A673 (cell line): ENCODE measurements at regions of chr2 and their contacts with region 1.

Region 1: DNA sequence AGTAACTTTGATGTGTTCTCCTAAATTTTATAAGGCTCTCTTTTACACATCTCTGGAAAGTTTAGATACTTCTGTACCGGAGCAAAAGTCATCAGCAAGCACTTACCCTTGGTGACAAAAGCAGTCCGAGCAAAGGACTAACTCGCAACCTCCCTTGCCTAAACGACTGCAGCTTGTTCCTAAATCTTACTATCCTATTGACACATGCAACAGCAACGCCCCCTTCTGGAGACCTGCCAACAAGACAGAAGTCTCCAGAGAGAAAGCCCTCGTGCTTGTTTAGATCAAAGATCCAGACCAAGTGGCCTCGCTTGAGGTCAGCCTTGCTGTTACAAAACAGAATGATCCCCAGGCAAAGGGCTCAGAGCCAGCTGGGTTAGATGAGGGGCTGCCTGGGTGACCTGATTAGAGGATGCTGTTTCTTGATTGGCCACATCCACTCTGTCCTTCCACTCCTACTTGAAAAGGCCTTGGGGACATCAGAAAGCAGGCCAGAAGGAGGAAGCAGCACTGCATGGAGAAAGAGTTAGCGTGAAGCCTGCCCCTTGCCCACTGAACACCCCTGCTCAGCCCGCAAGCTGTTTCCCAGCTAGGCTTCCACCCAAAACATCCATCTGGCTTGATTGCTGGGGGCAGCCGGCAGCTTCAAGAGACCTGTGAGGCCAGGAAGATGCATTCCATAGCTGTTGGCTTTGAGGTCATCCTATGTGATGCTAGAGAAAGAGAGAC is 94.3 kb downstream of the HNRNPLL start:
- DNase-seq: peak; percentile 92
- H3K4me3 ChIP-seq: no peak overlapping the region
- H3K27ac ChIP-seq: peak overlapping the region; percentile 36
- H3K4me1 ChIP-seq: peaks cover 20% of the 10 kb centered on the region
- H3K27me3 ChIP-seq: no peaks in the 10 kb centered on the region
- CTCF ChIP-seq: peak; percentile 83

Region 2: GRCh38 chr2:38377050-38377828 is 131.2 kb before region 1 on chr2 and contains the start of gene ATL2:
- CTCF ChIA-PET with region 1: no interaction called
- POLR2A ChIA-PET with region 1: no interaction called
- intact Hi-C with region 1: loop called (anchors 5 kb)
- DNase-seq: peak; percentile 97
- H3K4me3 ChIP-seq: peak within 1 kb of the TSS; percentile 96
- H3K27ac ChIP-seq: peak within 1 kb of the TSS; percentile 97
- H3K4me1 ChIP-seq: peaks cover 20% of the 10 kb centered on the region
- H3K27me3 ChIP-seq: no peaks in the 10 kb centered on the region
- CTCF ChIP-seq: no peak
- total RNA-seq, gene ATL2: 76.0 and 85.5 TPM in 2 replicates

Region 3: DNA sequence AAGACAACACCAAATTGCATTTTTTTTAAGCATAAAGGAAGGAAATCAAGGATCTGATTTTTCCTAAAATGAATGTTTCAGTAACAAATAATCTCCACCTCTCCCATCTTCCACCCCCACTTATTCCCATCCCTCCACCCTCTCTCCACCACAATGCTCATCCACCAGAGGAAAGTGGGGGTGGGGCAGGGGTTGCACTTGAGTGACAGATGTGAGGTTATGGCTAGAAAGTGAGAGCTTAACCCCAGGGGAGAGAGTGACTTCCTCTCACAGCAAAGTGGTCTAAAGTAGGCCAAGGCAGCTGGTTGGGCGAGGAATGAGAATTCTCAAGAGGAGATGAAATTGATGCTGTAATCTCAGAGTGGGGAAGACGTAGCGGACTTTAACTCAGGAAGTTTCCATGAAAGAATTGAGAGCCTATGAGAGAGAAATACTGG is 10.4 kb before region 1 on chr2:
- CTCF ChIA-PET with region 1: interaction called, 15 read pairs
- POLR2A ChIA-PET with region 1: no interaction called
- intact Hi-C with region 1: no loop called
- DNase-seq: peak; percentile 76
- H3K4me3 ChIP-seq: no peak overlapping the region
- H3K27ac ChIP-seq: no peak overlapping the region
- H3K4me1 ChIP-seq: peaks cover 7% of the 10 kb centered on the region
- H3K27me3 ChIP-seq: no peaks in the 10 kb centered on the region
- CTCF ChIP-seq: no peak

Region 4: GRCh38 chr2:38771632-38772031 is 263.2 kb after region 1 on chr2:
- CTCF ChIA-PET with region 1: no interaction called
- POLR2A ChIA-PET with region 1: no interaction called
- intact Hi-C with region 1: no loop called
- DNase-seq: peak; percentile 10
- H3K4me3 ChIP-seq: no peak overlapping the region
- H3K27ac ChIP-seq: no peak overlapping the region
- H3K4me1 ChIP-seq: peaks cover 18% of the 10 kb centered on the region
- H3K27me3 ChIP-seq: no peaks in the 10 kb centered on the region
- CTCF ChIP-seq: no peak

Region 5: GRCh38 chr2:39679805-39680204 is 1171.3 kb after region 1 on chr2:
- CTCF ChIA-PET with region 1: no interaction called
- POLR2A ChIA-PET with region 1: no interaction called
- intact Hi-C with region 1: no loop called
- DNase-seq: no peak
- H3K4me3 ChIP-seq: no peak overlapping the region
- H3K27ac ChIP-seq: no peak overlapping the region
- H3K4me1 ChIP-seq: no peaks in the 10 kb centered on the region
- H3K27me3 ChIP-seq: peaks cover 6% of the 10 kb centered on the region
- CTCF ChIP-seq: no peak